Posterior cingulate gyrus (tissue), 11 donors: ENCODE measurements at regions of chr4 and their contacts with region 1.

Region 1: DNA sequence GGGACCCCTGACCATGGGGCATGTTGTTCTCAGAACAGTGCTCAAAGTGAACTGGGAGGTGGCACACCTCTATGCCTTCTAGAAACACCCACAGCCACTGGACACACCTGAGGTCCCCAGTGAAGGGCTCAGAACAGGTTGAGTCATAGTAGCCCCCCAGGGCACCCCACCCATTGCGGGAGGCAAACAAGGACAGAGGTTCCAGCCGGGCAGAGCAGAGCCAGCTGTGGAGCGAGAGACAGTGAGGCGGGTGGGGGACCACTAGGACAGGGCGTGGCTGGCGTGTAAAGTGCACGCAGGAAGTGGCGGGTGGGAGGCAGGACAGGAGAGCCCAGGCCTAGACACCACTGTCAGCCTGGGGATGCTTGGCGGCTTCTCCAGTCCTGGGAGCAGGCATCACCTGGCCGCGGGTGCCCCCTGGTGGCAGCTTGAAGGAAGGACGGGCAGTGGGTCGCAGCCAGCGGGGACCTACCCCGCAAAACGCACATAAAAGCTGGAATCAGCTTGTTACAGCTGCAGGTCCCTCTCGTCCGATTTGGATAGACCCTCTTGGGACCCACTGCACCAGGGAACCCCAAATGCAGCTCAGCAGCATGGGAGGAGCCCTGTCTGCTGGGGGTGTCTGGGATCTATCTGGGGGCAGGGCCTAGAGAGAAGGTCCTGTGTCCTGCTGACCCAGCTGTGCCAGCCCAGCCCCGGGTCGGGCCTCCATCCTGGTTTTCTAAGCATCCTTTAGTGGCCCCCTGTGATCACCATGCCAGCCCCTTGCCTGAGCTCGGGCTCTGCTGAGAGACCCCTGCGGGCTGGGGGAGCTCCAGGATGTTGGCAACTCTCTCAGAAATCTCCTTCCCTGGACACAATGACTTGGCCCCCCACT is 57.6 kb downstream of the WFS1 start:
- DNase-seq: peak; percentile 73 to 98 (median 88)

Region 2: GRCh38 chr4:5998333-5998936 is 328.8 kb before region 1 on chr4:
- intact Hi-C with region 1: loop called (anchors 5 kb)
- DNase-seq: peak; percentile 60 to 96 (median 75)

Region 3: DNA sequence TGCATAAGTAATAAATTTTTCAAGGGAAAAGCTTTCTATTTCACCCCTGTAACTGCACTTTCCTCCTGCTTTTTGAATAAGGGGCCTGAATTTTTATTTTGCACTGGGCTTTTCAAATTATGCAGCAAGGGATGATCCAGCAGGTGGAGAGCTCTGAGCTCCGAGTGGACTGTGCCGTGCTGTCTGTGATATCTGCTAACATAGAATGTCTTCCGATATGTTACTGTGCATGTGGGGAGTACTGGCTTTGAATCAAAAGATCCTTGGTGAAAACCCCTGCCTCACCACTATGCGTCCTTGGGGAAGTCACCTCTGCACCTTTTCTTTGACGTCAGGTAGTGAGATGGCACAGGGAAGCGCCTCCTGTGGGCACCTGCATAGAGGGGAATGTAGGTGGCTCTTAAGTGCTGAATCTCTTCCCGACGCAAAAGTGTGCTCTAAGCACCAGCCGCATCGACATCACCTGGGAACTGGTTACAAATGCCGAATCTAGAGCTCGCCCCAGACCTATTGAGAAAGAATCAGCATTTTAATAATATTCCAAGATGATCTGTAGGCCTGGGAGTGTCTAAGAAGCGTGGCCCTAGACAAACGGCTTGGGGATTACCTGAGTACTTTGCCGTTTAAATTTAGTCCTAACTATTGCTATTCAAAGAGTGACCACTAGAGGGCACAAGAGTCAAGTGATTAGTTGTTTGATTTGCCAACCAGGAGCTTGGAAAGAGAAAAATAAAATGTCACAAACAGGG is 76.9 kb before region 1 on chr4:
- intact Hi-C with region 1: loop called (anchors 1 kb)
- DNase-seq: peak in 2 of 10 donors; percentile 75 to 82

Region 4: DNA sequence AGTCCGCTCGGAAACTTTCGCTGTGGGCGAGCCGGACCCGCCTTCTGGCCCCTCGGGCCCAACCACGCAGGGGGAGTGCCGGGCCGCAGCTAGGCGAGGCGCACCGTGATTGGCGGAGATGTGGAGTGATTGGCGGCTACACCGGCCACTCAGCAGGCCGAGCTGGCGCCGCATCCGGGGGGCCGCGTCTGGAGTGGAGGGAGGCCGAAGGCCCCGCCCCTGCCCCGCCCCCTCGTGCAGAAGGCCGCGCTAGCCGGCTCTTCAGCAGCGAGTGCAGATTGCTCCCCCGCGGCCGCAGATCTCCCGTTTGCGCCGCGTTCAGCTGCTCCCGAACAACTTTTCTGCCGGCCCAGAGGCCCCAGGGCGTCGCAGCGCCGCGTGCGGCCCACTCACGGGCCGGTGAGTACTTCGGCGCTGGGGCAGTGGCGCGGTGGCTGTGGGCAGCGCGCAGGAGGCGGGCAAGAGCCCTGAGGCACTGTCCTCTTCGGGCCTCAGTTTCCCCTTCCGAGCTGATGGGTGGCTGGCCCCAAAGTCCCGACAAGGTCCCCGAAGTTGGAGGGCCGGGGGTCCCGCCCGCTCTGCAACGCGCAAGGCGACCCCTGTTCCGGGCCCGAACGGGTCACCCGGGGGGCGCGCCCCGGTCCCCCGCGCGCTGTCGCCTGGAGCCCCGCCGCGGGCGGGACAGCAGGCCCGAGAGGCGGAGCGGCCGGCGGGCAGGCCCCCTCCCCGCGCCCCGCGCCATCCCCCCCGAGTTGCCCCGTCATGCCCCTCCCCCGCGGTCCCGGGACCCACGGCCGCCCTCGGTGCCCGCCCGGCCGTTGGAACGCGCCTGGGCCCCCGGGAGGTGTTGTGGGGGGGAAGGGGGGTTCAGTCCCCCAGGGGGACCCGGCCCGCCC is 57.4 kb before region 1 on chr4 and contains the start of gene WFS1:
- intact Hi-C with region 1: loop called (anchors 5 kb)
- DNase-seq: peak; percentile 98 to 100 (median 99)

Region 5: GRCh38 chr4:6489927-6490326 is 162.6 kb after region 1 on chr4:
- intact Hi-C with region 1: no loop called
- DNase-seq: no peak